OCI-LY7 (cell line): ENCODE measurements at regions of chr4 and their contacts with region 1.

Region 1: DNA sequence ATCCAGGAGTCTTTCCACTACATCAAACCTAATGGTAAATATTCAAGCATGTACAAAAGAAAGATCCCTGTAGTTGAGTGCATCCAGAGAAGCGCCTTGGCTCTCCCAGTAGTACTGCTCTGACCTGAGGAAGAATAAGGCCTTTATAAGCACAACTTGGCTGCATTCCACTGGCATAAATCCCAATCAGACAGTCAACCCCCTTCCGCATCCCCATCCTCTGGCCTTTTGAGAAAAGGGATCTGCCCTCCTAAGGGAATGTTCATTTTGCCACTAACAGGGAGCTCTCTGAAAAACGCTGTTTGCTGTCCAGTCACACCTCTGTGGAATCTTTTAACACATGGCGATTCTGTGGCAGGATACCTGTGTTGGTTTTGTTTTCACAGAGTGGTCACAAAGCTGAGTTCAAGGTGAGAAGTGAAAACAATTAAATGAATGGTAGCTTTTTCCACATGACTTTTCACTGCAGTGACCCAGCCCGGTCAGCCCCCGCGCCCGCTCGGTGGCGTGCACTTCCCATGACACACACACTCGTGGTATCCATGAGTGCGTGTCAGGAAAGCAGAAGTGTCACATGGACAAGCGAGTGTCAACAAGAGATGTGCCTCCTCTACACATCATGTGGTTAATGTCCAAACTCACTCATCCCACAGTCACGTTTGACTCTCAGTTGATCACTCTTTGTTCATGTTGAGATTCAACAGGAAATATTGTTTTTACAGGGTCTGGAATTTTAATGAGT is 112.2 kb upstream of the ENPP6 start:
- DNase-seq: no peak
- H3K4me3 ChIP-seq: no peak overlapping the region
- H3K27ac ChIP-seq: peak overlapping the region; percentile 82
- H3K4me1 ChIP-seq: peaks cover 77% of the 10 kb centered on the region
- CTCF ChIP-seq: no peak

Region 2: DNA sequence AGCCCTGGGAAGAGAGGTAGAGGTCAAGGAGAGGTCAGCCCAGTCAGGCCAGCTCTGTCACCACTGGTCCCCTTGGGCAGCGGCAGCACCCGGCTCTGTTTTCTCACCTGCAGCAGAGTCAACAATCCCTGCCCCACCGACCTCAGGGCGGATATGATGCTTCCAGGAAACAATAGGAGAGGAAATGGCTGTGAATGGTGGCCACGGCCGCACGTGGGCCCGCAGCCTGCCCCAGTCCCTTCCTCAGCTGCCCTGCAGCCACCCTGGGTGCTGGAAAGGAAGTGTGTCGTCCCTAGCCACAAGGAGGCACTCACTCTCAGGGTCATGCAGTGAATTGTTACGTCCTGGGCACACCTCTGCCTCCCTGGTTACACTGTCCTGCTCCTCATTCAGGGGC is 19.7 kb before region 1 on chr4:
- CTCF ChIA-PET with region 1: interaction called, 4 read pairs
- POLR2A ChIA-PET with region 1: interaction called, 14 read pairs
- intact Hi-C with region 1: no loop called
- DNase-seq: peak; percentile 73
- H3K4me3 ChIP-seq: no peak overlapping the region
- H3K27ac ChIP-seq: no peak overlapping the region
- H3K4me1 ChIP-seq: peaks cover 56% of the 10 kb centered on the region
- CTCF ChIP-seq: peak; percentile 76

Region 3: GRCh38 chr4:184318852-184319251 is 11.0 kb before region 1 on chr4:
- CTCF ChIA-PET with region 1: interaction called, 4 read pairs
- POLR2A ChIA-PET with region 1: interaction called, 29 read pairs
- intact Hi-C with region 1: no loop called
- DNase-seq: no peak
- H3K4me3 ChIP-seq: no peak overlapping the region
- H3K27ac ChIP-seq: peak overlapping the region; percentile 4
- H3K4me1 ChIP-seq: peaks cover 47% of the 10 kb centered on the region
- CTCF ChIP-seq: no peak

Region 4: GRCh38 chr4:184343502-184344177 is 13.8 kb after region 1 on chr4:
- CTCF ChIA-PET with region 1: interaction called, 9 read pairs
- POLR2A ChIA-PET with region 1: interaction called, 117 read pairs
- intact Hi-C with region 1: loop called (anchors 1 kb)
- DNase-seq: peak; percentile 64
- H3K4me3 ChIP-seq: peak overlapping the region; percentile 61
- H3K27ac ChIP-seq: peak overlapping the region; percentile 26
- H3K4me1 ChIP-seq: peaks cover 66% of the 10 kb centered on the region
- CTCF ChIP-seq: no peak

Region 5: GRCh38 chr4:184351560-184352451 is 22.0 kb after region 1 on chr4:
- CTCF ChIA-PET with region 1: interaction called, 9 read pairs
- POLR2A ChIA-PET with region 1: interaction called, 67 read pairs
- intact Hi-C with region 1: no loop called
- DNase-seq: no peak
- H3K4me3 ChIP-seq: no peak overlapping the region
- H3K27ac ChIP-seq: no peak overlapping the region
- H3K4me1 ChIP-seq: peaks cover 69% of the 10 kb centered on the region
- CTCF ChIP-seq: no peak